ENCODE measurements at regions of chr2 and their contacts with region 1.

Region 1: GRCh38 chr2:101873543-101873942 is 118.2 kb upstream of the IL1R2 start:
- DNase-seq: no peak
- ATAC-seq: peak; percentile 40; the same call in 1 of the 2 replicates
- H3K4me3 ChIP-seq: no peak overlapping the region
- H3K27ac ChIP-seq: no peak overlapping the region
- H3K4me1 ChIP-seq: no peaks in the 10 kb centered on the region
- H3K27me3 ChIP-seq: no peaks in the 10 kb centered on the region
- CTCF ChIP-seq: peak; percentile 26 to 39 (median 31); a peak in 3 of 6 replicates
- POLR2A ChIP-seq: no peak
- RAD21 ChIP-seq: peak; percentile 55

Region 2: GRCh38 chr2:101893681-101894381 is 20.3 kb after region 1 on chr2:
- CTCF ChIA-PET with region 1: no interaction called
- POLR2A ChIA-PET with region 1: no interaction called
- RAD21 ChIA-PET with region 1: no interaction called
- intact Hi-C with region 1: loop called (anchors 2 kb)
- DNase-seq: no peak
- ATAC-seq: no peak
- H3K4me3 ChIP-seq: no peak overlapping the region
- H3K27ac ChIP-seq: no peak overlapping the region
- H3K4me1 ChIP-seq: no peaks in the 10 kb centered on the region
- H3K27me3 ChIP-seq: no peaks in the 10 kb centered on the region
- CTCF ChIP-seq: no peak
- POLR2A ChIP-seq: no peak
- RAD21 ChIP-seq: no peak